Colonic mucosa (tissue), 4 donors: ENCODE measurements at regions of chr6 and their contacts with region 1.

Region 1: GRCh38 chr6:122609856-122610689 is at the start of gene PKIB:
- DNase-seq: peak; percentile 79
- H3K4me3 ChIP-seq: peak within 1 kb of the TSS; percentile 52
- H3K27ac ChIP-seq: peak within 1 kb of the TSS; percentile 70
- H3K4me1 ChIP-seq: no peaks in the 10 kb centered on the region
- H3K27me3 ChIP-seq: no peaks in the 10 kb centered on the region
- CTCF ChIP-seq: no peak
- total RNA-seq, gene PKIB: 63.4 to 113 TPM

Region 2: GRCh38 chr6:122365775-122366403 is 244.2 kb before region 1 on chr6:
- intact Hi-C with region 1: no loop called
- DNase-seq: no peak
- H3K4me3 ChIP-seq: no peak overlapping the region
- H3K27ac ChIP-seq: no peak overlapping the region
- H3K4me1 ChIP-seq: no peaks in the 10 kb centered on the region
- H3K27me3 ChIP-seq: no peaks in the 10 kb centered on the region
- CTCF ChIP-seq: no peak

Region 3: GRCh38 chr6:122709922-122710512 is 99.9 kb after region 1 on chr6:
- intact Hi-C with region 1: no loop called
- DNase-seq: no peak
- H3K4me3 ChIP-seq: no peak overlapping the region
- H3K27ac ChIP-seq: no peak overlapping the region
- H3K4me1 ChIP-seq: no peaks in the 10 kb centered on the region
- H3K27me3 ChIP-seq: no peaks in the 10 kb centered on the region
- CTCF ChIP-seq: no peak

Region 4: DNA sequence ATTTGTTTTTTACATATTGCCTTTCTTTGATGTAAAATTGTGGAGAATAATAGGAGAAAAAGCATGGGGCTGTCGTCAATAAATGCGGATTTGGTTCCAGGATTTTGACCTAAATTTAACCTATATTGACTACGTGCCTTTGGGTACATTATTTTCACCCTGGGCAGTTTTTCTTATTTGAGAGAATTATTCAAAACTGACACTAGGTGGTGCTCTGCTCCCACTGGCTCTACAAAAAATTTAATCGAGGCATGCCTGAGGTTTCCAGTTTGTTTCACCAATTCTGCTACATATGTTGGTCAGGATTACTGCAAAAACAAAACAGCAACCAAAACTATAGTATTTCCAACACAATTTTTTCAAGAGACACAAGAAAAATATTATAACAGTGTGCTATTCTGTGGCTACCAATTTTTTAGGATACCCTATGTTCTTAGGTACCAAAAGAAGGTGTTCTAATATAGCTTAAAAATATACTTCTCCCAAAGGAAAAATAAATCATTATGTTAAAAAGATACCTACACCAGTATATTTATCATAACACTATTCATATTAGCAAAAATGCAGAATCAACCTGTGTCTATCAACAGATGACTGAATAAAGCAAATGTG is 120.8 kb after region 1 on chr6:
- intact Hi-C with region 1: loop called (anchors 10 kb)
- DNase-seq: no peak
- H3K4me3 ChIP-seq: no peak overlapping the region
- H3K27ac ChIP-seq: no peak overlapping the region
- H3K4me1 ChIP-seq: no peaks in the 10 kb centered on the region
- H3K27me3 ChIP-seq: no peaks in the 10 kb centered on the region
- CTCF ChIP-seq: peak; percentile 61

Region 5: GRCh38 chr6:122913558-122913957 is 303.5 kb after region 1 on chr6:
- intact Hi-C with region 1: no loop called
- DNase-seq: no peak
- H3K4me3 ChIP-seq: no peak overlapping the region
- H3K27ac ChIP-seq: no peak overlapping the region
- H3K4me1 ChIP-seq: no peaks in the 10 kb centered on the region
- H3K27me3 ChIP-seq: no peaks in the 10 kb centered on the region
- CTCF ChIP-seq: no peak